H1 (cell line): ENCODE measurements at regions of chr6 and their contacts with region 1.

Region 1: DNA sequence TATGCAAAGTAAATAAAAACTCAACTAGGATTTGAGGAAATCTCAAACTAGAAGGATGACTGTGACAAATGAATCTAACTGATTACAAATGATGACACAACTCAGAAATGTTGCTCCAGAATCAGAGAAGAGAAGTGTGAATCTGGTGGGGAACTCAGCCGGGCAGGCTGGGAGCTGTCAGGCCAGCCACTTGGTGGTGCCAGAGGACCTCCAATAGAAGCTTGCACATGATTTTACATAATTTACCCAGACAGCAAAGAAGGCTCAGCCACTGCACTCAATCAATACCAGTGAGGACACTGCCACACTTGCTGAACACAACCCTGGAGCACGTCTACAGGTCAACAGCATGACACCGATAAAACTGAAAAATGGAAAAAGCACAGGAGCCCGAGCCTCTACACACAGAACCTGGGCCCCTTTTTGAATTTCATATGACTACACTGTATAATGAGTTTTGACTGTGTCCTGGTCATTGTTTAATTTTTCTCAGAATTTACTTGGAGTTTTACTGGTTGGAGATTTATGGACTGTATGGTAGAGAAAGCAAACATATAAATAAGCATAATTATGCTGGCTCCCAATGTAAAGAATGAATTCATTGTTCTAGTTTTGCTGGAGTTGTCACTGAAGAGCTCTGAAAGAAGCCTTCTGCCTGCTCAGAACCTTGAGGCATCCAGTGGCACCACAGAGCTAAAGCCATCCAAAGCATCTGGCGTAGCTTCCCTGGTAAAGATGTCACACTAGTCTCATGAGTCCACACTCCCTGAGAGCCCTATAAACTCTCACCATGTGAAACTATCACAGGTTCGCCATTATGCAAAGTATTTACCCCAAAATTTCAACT is 296.5 kb downstream of the THBS2 start:
- DNase-seq: peak; percentile 25 to 67
- H3K4me3 ChIP-seq: no peak overlapping the region
- H3K27ac ChIP-seq: no peak overlapping the region
- H3K4me1 ChIP-seq: no peaks in the 10 kb centered on the region
- H3K27me3 ChIP-seq: no peaks in the 10 kb centered on the region
- CTCF ChIP-seq: peak; percentile 81 to 91 (median 88)
- EP300 ChIP-seq: no peak
- POLR2A ChIP-seq: no peak
- RAD21 ChIP-seq: peak; percentile 96 to 98

Region 2: DNA sequence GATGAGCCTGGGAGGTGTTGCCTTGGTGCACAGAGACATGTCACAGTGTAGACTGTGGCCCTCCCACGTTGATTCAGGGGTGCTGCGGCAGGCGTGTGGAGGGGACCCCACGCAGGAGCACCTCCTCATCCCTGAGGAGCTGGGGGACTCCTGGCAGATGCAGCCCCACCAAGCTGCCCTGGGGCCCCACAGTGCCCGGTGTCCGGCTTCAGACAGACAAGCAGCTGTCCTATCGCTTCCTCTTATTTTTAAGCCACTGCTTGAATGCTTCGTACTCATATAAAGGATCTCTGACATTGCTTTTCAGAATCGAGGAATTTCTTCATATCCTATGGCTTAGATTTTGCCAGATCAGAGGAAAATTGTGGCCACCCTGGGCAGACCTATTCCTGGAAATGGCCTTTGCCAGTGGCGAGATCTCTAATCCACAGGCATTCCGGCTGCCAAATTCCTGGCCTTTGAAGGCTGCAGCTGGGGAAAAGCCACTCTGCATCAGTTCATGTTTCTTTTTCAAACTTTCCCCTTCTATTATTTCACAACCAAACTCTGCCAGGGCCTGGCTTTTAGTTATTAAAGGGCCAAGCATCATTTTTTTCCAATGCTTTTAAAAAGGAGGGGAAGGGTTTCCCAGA is 40.4 kb before region 1 on chr6:
- CTCF ChIA-PET with region 1: no interaction called
- POLR2A ChIA-PET with region 1: no interaction called
- DNase-seq: no peak
- H3K4me3 ChIP-seq: no peak overlapping the region
- H3K27ac ChIP-seq: no peak overlapping the region
- H3K4me1 ChIP-seq: no peaks in the 10 kb centered on the region
- H3K27me3 ChIP-seq: no peaks in the 10 kb centered on the region
- CTCF ChIP-seq: no peak
- EP300 ChIP-seq: no peak
- POLR2A ChIP-seq: no peak
- RAD21 ChIP-seq: no peak

Region 3: DNA sequence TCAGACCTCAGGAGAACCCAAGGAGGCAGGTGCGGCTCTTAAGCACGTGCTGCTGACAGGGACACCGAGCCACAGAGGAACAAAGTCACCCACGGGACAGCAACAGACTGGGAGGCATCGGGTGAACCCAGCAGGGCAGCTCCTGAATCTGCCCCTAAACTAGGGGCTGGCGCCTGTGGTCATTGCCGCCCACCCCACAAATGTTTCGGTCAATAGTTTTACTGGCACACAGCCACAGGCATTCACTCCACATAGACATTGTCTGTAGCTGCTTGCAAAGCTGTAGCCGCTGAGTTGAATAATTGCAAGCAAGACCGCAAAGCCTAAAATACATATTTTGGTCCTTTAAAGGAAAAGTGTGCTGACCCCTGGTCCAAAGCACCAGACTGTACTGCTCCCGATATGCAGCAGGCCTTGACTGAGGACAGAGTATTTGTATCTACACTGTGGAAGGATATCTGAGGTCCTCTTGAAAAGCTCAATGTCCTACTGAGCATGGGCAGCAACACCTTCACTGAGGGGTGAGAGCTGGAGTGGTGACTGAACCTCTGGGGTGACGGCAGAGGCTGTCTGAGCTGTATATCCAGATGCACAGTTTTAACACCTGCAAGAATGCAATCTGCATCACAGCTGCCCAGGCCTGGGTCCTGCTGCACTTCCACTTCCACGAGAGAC is 13.7 kb before region 1 on chr6:
- CTCF ChIA-PET with region 1: interaction called, 13 read pairs
- POLR2A ChIA-PET with region 1: no interaction called
- DNase-seq: no peak
- H3K4me3 ChIP-seq: no peak overlapping the region
- H3K27ac ChIP-seq: no peak overlapping the region
- H3K4me1 ChIP-seq: no peaks in the 10 kb centered on the region
- H3K27me3 ChIP-seq: no peaks in the 10 kb centered on the region
- CTCF ChIP-seq: no peak
- EP300 ChIP-seq: no peak
- POLR2A ChIP-seq: no peak
- RAD21 ChIP-seq: no peak

Region 4: GRCh38 chr6:169130113-169130512 is 173.0 kb after region 1 on chr6:
- CTCF ChIA-PET with region 1: no interaction called
- POLR2A ChIA-PET with region 1: no interaction called
- DNase-seq: no peak
- H3K4me3 ChIP-seq: no peak overlapping the region
- H3K27ac ChIP-seq: no peak overlapping the region
- H3K4me1 ChIP-seq: peaks cover 0 to 5% (median 2%) of the 10 kb centered on the region in 4 experiments; a peak in 2 of 7 replicates
- H3K27me3 ChIP-seq: no peaks in the 10 kb centered on the region
- CTCF ChIP-seq: no peak
- EP300 ChIP-seq: no peak
- POLR2A ChIP-seq: no peak
- RAD21 ChIP-seq: no peak